ENCODE measurements at regions of chr20 and their contacts with region 1.

Region 1: GRCh38 chr20:5090191-5090590 is 29.6 kb downstream of the PCNA start:
- DNase-seq: peak; percentile 39
- CTCF ChIP-seq: no peak

Region 2: GRCh38 chr20:4573564-4574355 is 516.4 kb before region 1 on chr20:
- in situ Hi-C with region 1: no loop called
- DNase-seq: no peak
- CTCF ChIP-seq: no peak

Region 3: GRCh38 chr20:4750381-4750780 is 339.8 kb before region 1 on chr20:
- in situ Hi-C with region 1: loop called (anchors 10 kb)
- DNase-seq: no peak
- CTCF ChIP-seq: no peak

Region 4: DNA sequence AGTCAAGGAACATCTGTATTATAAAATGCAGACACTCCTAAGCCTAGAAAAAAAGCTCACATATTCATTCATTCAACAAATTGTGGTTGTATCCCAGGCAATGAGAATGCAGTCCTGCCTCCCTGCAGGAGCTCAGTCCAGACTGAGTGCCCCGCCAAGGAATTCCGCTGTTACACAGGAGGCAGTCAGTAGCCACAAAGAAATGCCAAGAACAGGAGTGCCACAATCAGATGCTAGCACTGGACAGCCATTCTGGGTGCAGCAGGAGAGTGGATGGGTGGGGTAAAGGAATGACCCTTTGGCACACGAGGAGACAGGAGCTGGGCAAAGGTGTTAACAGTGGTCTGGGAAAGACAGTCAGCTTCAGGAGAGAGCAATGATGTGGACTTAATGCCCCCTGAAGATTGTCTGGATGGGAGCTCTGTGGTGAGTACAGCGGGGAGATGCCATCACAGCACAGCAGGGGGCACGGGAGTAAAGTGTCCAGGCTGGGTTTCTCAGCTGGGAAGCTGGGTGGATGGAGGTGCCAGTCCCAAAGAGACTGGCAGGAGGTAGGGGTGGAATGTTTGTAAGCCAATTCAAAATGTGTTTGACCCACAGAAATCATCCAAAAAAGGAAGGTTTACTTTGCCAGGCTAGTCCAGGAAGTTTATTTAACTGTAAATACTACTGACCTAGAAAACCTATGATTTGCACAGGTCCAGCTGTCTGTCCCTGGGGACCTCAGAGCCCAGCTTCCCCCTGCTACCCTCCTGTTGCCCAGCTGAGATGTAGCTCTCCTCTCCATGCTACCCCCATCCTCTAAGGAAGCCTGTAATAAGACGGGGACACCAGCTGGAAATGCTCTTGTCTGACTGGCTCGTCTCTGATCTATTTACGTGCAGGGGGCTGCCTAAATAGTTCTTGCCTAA is 173.0 kb before region 1 on chr20:
- in situ Hi-C with region 1: no loop called
- DNase-seq: no peak
- CTCF ChIP-seq: no peak

Region 5: GRCh38 chr20:4989570-4989969 is 100.6 kb before region 1 on chr20:
- in situ Hi-C with region 1: no loop called
- DNase-seq: no peak
- CTCF ChIP-seq: no peak

Measured in GM13977 (cell line).